Right cardiac atrium (tissue), 5 donors: ENCODE measurements at regions of chr1 and their contacts with region 1.

Region 1: DNA sequence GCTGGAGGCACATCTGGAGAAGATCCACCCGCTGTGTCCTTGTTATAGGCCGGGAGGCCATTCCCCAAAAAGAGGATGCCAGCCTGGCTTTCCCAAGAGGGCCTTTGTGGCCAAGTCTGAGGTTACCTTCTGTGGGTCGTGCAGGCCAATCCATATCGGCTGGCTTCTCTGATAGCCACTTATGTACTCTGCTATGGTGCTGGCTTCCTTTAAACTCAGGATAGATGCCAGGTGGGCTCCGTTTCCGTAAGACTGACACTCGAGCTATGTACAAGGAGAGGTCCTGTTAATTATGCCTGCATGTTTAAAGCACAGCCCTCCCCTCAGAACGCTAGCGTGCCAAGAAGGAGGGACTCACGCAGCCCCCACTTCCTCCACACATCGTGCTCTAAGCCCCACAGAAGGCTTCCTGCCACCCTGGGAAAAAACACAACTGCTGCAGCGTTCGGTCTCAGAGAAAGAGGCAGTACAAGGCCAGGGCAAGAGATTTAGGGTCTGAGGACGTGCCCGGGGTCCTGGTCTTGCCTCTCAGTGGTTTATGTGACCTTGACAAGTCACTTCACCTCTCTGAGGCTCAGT is 11.6 kb downstream of the REG4 start:
- DNase-seq: no peak
- ATAC-seq: no peak
- H3K4me3 ChIP-seq: no peak overlapping the region
- H3K27ac ChIP-seq: no peak overlapping the region
- H3K4me1 ChIP-seq: no peaks in the 10 kb centered on the region
- H3K27me3 ChIP-seq: no peaks in the 10 kb centered on the region

Region 2: GRCh38 chr1:119475866-119476439 is 323.7 kb before region 1 on chr1:
- intact Hi-C with region 1: no loop called
- DNase-seq: peak in 1 of 3 donors; percentile 61
- ATAC-seq: peak; percentile 44 to 51
- H3K4me3 ChIP-seq: no peak overlapping the region
- H3K27ac ChIP-seq: no peak overlapping the region
- H3K4me1 ChIP-seq: no peaks in the 10 kb centered on the region
- H3K27me3 ChIP-seq: no peaks in the 10 kb centered on the region

Region 3: GRCh38 chr1:119752592-119752991 is 47.1 kb before region 1 on chr1:
- intact Hi-C with region 1: loop called in 1 of 4 experiments (anchors 5 kb)
- DNase-seq: no peak
- ATAC-seq: no peak
- H3K4me3 ChIP-seq: no peak overlapping the region
- H3K27ac ChIP-seq: no peak overlapping the region
- H3K4me1 ChIP-seq: no peaks in the 10 kb centered on the region
- H3K27me3 ChIP-seq: no peaks in the 10 kb centered on the region

Region 4: DNA sequence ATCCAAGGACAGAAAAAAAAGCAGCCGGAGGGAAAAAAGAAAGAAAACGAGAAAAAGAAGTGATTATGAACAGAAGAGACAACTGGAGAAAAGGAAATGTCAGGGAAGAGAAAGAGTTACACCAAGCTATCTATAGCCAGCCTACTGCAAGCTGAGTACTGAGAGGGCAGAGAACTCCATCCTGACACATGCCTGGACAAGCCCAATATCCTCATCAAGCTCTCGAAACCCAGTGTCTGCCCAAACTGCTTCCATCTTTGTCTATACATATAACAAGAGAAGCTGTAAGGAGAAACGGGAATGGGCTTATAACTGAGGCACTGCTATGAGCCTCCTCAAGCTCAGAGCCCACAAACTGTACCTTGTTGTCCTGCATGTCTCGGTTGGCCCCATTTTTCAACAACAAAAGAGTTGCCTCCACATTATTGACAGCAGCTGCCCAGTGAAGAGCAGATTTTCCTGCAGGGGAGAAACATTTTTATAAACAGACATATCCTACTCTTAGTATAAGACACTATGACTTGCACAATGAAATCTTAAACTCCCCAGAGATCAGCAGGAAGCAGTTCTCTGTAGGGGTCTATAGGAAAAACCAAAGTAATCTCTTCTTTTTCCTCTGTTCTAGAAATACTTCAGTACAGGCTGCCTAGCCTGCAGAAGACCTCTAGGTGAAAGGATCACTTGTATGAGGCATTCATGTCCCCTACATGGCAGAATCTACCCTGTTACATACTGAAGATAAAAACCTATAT is 117.8 kb after region 1 on chr1:
- intact Hi-C with region 1: no loop called
- DNase-seq: no peak
- ATAC-seq: no peak
- H3K4me3 ChIP-seq: no peak overlapping the region
- H3K27ac ChIP-seq: no peak overlapping the region
- H3K4me1 ChIP-seq: no peaks in the 10 kb centered on the region
- H3K27me3 ChIP-seq: no peaks in the 10 kb centered on the region